ENCODE measurements at regions of chr10 and their contacts with region 1.

Region 1: GRCh38 chr10:15433850-15434537 is 62.9 kb upstream of the FAM171A1 start:
- DNase-seq: peak in 3 of 5 donors; percentile 41 to 90 (median 89)
- H3K4me3 ChIP-seq: peak overlapping the region; percentile 62 to 78 (median 63)
- H3K27ac ChIP-seq: no peak overlapping the region
- H3K4me1 ChIP-seq: no peaks in the 10 kb centered on the region
- H3K27me3 ChIP-seq: no peaks in the 10 kb centered on the region
- CTCF ChIP-seq: peak; percentile 66

Region 2: DNA sequence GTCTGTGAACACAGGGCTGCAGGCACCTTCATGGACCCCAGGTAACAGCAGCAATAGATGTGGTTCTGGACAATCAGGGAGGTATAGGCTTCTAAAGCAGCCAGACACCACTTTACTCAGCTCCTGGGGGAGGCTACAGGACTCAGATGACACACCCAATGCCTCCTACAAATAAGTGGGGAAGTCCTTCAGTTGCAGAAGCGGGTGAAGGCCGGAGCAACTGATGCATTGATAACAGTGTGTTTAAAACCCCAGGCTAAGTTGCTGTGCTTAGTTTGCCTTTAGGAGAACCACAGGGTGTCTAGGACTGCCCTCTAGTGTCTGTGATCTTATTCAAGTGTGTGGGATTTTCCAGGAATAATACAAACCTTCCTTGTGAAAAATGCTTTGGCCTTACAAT is 291.6 kb after region 1 on chr10:
- intact Hi-C with region 1: loop called (anchors 5 kb)
- DNase-seq: peak in 4 of 5 donors; percentile 38 to 85 (median 58)
- H3K4me3 ChIP-seq: no peak overlapping the region
- H3K27ac ChIP-seq: no peak overlapping the region
- H3K4me1 ChIP-seq: peaks cover 0 to 3% (median 0%) of the 10 kb centered on the region in 3 donors
- H3K27me3 ChIP-seq: no peaks in the 10 kb centered on the region
- CTCF ChIP-seq: peak; percentile 51

Region 3: GRCh38 chr10:15824498-15824897 is 390.5 kb after region 1 on chr10:
- intact Hi-C with region 1: loop called (anchors 10 kb)
- DNase-seq: peak in 2 of 5 donors; percentile 27 to 28
- H3K4me3 ChIP-seq: no peak overlapping the region
- H3K27ac ChIP-seq: no peak overlapping the region
- H3K4me1 ChIP-seq: no peaks in the 10 kb centered on the region
- H3K27me3 ChIP-seq: no peaks in the 10 kb centered on the region
- CTCF ChIP-seq: no peak